Activated CD4-positive, alpha-beta T cell treated with anti-CD3 and anti-CD28 coated beads for 36 hours (primary cell): ENCODE measurements at regions of chr15 and their contacts with region 1.

Region 1: DNA sequence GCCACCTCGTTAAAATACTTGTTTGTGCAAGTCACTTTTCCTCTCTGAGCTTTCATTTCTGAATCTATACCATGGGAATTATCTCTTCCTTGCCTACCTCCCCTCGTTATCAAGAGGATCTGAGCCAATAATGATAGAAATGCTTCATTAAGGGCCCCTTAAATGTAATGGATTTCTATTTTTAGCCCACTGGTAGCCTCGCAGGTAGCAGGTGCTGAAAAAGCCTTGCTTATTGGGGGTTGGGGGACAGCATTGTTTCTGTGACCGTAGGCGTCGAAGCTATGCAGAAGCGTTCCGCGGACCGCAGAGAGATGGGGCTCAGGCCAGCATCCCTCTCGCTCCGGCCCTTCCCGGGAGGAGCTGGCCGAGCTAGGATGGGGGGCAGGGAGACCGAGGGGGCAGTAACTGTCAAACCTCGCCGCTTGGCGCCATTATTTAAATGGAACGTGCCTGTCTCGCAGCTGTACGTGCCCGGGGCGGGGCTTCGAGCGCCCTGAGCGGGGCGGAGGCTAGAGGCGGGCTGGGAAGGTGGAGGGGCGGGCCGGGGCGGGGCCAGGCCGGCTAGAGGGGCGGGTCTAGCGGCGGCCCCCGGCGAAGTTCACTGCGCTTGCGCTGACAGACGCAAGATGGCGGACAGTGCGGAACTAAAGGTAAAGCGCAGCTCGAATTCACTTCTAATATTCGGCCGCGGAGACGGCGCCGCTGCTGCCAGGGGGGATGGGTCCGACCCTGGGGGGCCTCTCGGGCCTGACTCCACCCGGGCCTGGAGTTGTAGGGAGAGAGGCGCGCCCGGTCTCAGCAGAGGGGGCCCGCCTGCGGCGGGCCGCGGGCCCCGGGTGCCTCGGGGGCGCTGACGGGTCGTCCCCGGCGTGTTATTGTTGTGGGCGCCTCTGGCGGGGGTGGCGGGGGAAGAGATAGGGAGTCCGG is at the start of gene PIAS1:
- DNase-seq: peak; percentile 98
- ATAC-seq: peak; percentile 90
- H3K4me3 Mint-ChIP-seq: peak within 1 kb of the TSS; percentile 86
- H3K27ac Mint-ChIP-seq: peak within 1 kb of the TSS; percentile 95
- H3K4me1 Mint-ChIP-seq: peaks cover 43% of the 10 kb centered on the region
- H3K27me3 Mint-ChIP-seq: peaks cover 14% of the 10 kb centered on the region
- total RNA-seq, gene PIAS1: 26.7 to 45.8 TPM

Region 2: DNA sequence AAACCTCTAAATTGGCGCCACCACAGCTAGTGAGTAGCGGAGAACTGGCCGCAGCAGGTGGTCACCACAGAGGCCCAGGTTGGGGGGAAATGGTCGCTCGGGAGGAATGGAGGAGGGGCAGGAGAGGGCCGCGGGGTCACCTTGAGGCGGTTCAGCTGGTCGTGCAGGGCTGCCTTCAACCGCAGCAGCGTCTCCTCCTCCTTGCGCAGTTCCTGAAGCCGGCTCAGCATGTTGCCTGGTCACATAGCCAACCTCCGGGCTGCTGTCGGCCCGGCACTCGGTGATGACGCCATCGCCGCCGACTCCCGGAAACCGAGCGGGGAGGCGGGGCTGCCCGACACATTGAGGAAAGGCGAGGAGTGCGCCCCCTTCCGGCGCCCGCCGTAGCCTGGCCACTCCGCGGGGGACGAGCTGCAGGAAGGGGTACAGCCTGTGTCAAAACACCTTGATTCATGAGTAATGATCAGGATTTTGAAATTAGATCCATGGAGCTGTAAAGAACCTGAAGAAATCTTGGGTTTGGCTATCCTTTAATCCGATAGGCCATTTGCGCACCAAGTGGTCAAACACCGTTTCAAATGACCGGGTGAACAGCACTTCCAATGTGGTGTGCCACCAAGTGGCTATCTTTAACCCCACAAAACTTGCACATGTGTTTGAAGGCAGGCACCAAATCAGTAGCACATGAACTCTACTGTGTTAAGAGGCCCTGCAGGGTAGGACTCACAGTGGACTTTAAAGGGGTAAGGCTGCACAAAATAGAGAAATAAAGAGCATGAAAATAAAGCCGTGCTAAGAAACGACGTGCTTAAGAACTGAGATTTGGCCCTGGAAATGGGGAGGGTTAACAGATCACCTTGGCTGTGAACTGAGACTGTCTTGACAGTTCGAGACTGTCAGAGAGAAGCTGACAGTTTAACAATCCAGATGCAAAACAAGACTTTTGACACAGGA is 1556.2 kb before region 1 on chr15 and contains the start of gene SNAPC5:
- CTCF ChIA-PET with region 1: no interaction called
- POLR2A ChIA-PET with region 1: no interaction called
- intact Hi-C with region 1: loop called in 1 of 2 experiments (anchors 1 kb)
- DNase-seq: peak; percentile 99
- ATAC-seq: peak; percentile 90
- H3K4me3 Mint-ChIP-seq: peak within 1 kb of the TSS; percentile 85
- H3K27ac Mint-ChIP-seq: peak within 1 kb of the TSS; percentile 93
- H3K4me1 Mint-ChIP-seq: peaks cover 56% of the 10 kb centered on the region
- H3K27me3 Mint-ChIP-seq: no peaks in the 10 kb centered on the region
- total RNA-seq, gene SNAPC5: 25.7 to 30.1 TPM

Region 3: DNA sequence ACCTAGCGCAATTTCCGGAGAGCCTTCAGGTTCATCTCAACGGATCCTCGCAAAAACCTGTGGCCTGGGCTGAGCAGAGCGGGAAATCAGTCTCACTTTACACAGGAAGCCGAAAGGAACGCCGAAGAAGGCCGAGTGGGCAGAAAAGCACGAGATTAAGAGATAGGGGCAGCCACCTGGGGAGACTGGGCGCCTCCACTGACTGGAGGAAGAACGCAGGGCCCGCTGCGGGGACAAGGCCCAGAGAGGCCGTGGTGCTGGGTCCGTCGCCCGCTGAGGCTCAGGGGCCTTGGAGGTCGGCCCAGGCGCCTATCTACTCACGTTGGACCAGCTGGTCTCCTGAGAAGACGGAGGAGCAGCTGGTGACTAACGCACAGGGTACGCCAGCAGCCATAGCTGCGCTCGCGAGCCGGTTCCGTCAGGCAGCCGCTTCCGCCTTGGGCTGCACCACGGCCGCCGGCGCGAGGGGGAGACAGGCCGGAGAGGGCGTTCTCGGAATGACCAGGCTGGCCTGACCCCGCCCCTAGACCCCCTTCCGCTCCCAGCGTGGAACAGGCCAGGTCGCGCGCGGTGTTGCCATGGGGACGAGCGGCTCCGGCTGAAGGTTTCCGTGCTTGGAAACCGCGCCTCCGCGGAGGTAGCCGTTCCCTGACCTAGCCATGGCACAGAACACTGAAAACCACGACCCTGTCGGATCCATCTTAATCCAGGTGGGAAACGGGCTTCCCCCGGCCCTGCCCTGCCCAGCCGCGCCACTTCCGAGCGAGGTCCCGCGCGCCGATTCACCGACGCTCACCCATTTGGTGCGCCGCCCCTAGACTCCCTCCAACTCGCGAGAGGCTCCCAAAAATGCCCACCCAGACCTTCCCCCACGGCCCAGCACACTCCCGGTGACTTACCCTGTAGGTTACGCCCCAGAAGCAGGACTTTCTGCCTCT is 799.5 kb before region 1 on chr15 and contains the starts of genes AAGAB and IQCH:
- CTCF ChIA-PET with region 1: no interaction called
- POLR2A ChIA-PET with region 1: no interaction called
- intact Hi-C with region 1: loop called in 1 of 2 experiments (anchors 5 kb)
- DNase-seq: peak; percentile 98
- ATAC-seq: peak; percentile 93
- H3K4me3 Mint-ChIP-seq: peak within 1 kb of the TSS; percentile 100
- H3K27ac Mint-ChIP-seq: peak within 1 kb of the TSS; percentile 99
- H3K4me1 Mint-ChIP-seq: peaks cover 37% of the 10 kb centered on the region
- H3K27me3 Mint-ChIP-seq: no peaks in the 10 kb centered on the region
- total RNA-seq, gene AAGAB: 43.9 to 48.6 TPM
- total RNA-seq, gene IQCH: 1.8 to 2.1 TPM

Region 4: DNA sequence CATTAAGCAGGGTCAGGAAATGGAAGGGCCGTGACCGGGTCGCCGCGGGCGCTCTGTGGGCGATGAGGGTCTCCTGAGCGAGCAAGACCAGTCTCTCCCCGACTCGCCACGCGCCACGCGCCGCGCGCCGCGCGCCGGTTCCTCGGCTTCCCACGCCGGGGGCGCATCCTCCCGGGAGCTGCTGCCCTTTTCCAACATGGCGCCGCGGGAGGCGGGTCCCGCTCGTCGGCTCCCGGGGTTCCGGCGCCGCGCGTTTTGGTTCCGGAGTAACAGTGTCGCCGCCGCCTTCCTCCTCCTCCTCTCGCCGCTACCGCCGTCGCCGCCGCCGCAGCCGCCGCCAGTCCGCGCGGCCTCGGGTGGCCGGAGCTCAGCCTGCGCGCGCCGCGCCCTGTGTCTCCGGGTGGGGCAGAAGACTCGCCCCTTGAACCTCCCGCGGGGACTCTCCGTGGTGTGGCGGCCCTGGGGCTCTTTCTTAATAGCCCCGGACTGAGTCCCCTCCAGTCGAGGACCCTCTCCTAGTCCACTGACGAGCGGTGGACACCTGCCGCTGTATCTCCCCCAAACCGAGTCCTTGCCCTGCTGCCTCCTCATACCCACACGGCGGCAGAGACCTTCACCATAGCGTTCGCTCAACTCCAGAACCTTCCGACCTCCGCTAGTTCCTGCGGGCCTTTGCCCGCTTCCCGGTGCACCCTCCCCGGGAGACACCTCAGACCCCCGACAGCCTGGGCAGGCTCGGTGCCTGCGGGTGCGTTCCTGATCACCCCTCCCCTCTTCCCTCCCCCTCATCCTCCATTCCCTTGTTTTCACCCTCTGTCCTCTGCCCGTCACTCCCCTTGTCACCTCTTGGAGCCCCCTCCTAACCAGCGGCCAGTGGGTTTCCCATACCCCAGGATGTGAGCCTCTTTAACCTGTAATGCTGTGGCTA is 511.3 kb before region 1 on chr15 and contains the start of gene MAP2K5:
- CTCF ChIA-PET with region 1: no interaction called
- POLR2A ChIA-PET with region 1: no interaction called
- intact Hi-C with region 1: loop called in 1 of 2 experiments (anchors 2 kb)
- DNase-seq: peak; percentile 90
- ATAC-seq: peak; percentile 70
- H3K4me3 Mint-ChIP-seq: peak within 1 kb of the TSS; percentile 82
- H3K27ac Mint-ChIP-seq: peak within 1 kb of the TSS; percentile 95
- H3K4me1 Mint-ChIP-seq: peaks cover 43% of the 10 kb centered on the region
- H3K27me3 Mint-ChIP-seq: no peaks in the 10 kb centered on the region
- total RNA-seq, gene MAP2K5: 18.0 to 26.7 TPM

Region 5: GRCh38 chr15:68114356-68114755 is 60.4 kb after region 1 on chr15:
- CTCF ChIA-PET with region 1: interaction called, 4 read pairs
- POLR2A ChIA-PET with region 1: interaction called, 4 read pairs
- intact Hi-C with region 1: loop called (anchors 2 to 5 kb)
- DNase-seq: no peak
- ATAC-seq: peak; percentile 55
- H3K4me3 Mint-ChIP-seq: peak overlapping the region; percentile 48
- H3K27ac Mint-ChIP-seq: peak overlapping the region; percentile 63
- H3K4me1 Mint-ChIP-seq: peaks cover 66% of the 10 kb centered on the region
- H3K27me3 Mint-ChIP-seq: no peaks in the 10 kb centered on the region

Region 6: DNA sequence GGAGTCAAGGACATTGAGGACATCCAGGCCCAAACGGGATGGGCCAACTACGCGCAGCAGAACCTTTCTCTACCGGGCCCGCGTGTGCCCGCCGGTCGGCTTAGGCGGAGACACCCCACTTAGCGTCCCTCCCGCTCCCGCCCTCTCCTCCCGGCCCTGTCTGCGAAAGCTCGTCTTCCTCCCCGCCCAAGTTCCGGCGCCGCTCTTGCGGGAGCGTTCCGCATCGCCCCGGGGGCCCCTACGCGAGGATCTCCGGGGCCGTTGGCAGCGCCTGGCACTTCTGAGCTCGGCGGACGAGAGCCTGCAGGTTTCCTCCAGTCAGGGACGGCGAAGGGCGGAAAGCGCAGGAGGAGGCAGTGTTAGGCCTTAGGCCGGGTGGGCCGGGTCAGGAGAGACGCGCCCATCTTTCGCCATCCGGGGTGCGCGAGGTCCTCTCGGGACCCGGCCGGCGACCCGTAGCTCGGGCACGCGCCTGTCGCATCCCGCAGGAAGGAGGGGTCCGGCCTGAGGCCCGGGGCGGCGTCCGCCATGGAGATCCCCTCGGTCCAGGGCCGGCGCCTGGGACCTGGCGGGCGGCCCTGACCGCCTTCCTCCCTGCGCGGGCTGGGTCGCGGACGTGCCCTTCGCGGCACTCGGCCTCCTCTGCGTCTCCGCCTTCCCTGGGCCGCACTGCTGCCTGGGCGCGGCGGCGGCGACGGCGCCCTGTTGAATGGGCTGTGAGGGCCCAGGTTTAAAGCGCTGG is 223.8 kb after region 1 on chr15 and contains the start of gene FEM1B:
- CTCF ChIA-PET with region 1: no interaction called
- POLR2A ChIA-PET with region 1: interaction called, 4 read pairs
- intact Hi-C with region 1: loop called (anchors 1 kb)
- DNase-seq: peak; percentile 94
- ATAC-seq: peak; percentile 79
- H3K4me3 Mint-ChIP-seq: peak within 1 kb of the TSS; percentile 99
- H3K27ac Mint-ChIP-seq: peak within 1 kb of the TSS; percentile 99
- H3K4me1 Mint-ChIP-seq: peaks cover 43% of the 10 kb centered on the region
- H3K27me3 Mint-ChIP-seq: no peaks in the 10 kb centered on the region
- total RNA-seq, gene FEM1B: 41.1 to 50.0 TPM

Region 7: DNA sequence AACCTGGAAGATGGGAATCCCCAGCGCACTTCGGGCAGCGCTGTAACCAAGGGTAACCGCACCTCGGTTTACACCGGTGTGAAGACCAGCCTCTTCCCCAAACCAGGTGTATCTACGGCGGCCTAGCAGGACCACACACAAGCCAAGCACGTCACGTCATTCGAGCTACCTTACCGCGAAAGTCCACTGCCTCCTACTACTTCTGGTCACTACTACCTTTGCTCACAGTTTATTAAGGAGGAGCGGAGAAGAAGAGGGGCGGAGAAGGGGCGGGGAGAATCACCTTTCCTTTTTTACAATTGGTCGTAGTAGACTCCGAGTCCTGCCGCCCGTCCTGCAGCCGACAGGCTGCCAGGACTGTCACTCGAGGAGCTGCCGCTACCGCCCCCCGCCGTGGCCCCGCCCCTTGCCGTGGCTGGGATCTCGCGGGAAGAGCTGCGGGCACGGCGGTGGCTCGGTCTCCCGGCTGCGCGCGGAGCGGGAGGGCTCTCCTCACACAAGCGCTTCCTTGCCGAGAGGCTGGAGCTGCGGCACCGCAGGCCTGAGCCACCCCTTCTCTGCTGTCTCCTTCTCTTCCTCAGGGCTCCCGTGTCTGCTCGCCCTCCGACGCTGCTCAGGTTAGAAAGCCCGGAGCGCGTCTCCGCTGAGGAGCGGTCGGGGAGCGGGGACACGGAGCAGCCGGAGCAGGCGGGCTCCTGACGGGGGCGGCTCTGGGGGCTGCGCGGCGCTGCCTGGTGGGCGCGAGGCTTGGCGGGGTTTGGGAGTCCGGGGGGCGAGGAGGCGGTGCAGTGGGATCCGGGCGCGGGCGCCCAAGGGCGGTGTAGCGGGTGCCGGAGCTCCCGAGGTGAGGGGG is 1106.4 kb after region 1 on chr15 and contains the start of gene GLCE:
- CTCF ChIA-PET with region 1: no interaction called
- POLR2A ChIA-PET with region 1: no interaction called
- intact Hi-C with region 1: loop called in 1 of 2 experiments (anchors 10 kb)
- DNase-seq: peak; percentile 96
- ATAC-seq: peak; percentile 98
- H3K4me3 Mint-ChIP-seq: peak within 1 kb of the TSS; percentile 90
- H3K27ac Mint-ChIP-seq: peak within 1 kb of the TSS; percentile 84
- H3K4me1 Mint-ChIP-seq: peaks cover 16% of the 10 kb centered on the region
- H3K27me3 Mint-ChIP-seq: no peaks in the 10 kb centered on the region
- total RNA-seq, gene GLCE: 3.6 to 4.2 TPM